K562 (cell line): ENCODE measurements at regions of chr11 and their contacts with region 1.

Region 1: DNA sequence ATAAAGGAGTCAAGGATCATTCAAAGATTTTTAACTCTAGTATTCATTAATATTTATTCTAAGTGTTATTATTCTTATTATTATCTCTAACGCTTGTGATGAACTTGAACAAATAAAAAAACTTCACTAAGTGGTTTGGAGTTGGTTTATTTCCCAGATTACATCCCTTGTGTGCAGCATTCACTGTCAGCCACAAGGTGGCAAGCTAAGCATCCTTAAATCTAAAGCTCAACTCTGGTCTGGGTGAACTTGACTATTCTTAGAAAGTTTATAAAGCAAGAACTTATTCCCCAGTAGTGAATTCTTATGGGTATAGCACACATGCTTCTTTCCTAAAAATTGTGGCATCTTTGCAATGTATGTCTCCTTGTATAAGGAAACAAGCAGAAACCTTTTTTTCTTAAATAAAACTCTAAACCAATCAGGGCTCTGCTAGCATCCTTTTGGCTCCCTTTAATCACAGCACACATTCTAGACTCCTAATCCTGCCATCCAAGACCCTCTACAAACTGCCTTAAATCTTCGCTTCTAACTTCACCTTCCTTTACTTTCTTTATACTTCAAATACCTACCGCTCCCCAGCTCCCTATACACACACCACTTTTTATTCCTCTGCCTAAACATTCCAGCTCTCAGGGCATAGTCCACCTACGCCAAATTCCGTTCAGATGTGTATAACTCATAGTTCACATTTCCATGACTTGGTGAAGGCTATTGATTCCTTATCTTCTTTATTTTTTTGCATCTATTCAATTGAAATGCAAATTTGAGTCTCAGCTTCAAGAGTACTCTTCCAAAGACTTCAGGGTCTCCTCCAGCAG is 1068.8 kb downstream of the DLG2 start:
- DNase-seq: peak; percentile 16 to 45 (median 28)
- ATAC-seq: peak; percentile 75; the same call in 2 of the 3 replicates
- H3K4me3 ChIP-seq: no peak overlapping the region
- H3K27ac ChIP-seq: no peak overlapping the region
- H3K4me1 ChIP-seq: no peaks in the 10 kb centered on the region
- H3K27me3 ChIP-seq: no peaks in the 10 kb centered on the region
- CTCF ChIP-seq: peak; percentile 26 to 59 (median 58); a peak in 4 of 6 replicates
- EP300 ChIP-seq: no peak
- POLR2A ChIP-seq: no peak
- RAD21 ChIP-seq: peak; percentile 43 to 71

Region 2: GRCh38 chr11:84157639-84158038 is 400.7 kb before region 1 on chr11:
- CTCF ChIA-PET with region 1: no interaction called
- POLR2A ChIA-PET with region 1: no interaction called
- in situ Hi-C with region 1: no loop called
- intact Hi-C with region 1: no loop called
- DNase-seq: no peak
- ATAC-seq: no peak
- H3K4me3 ChIP-seq: no peak overlapping the region
- H3K27ac ChIP-seq: no peak overlapping the region
- H3K4me1 ChIP-seq: no peaks in the 10 kb centered on the region
- H3K27me3 ChIP-seq: no peaks in the 10 kb centered on the region
- CTCF ChIP-seq: no peak
- EP300 ChIP-seq: no peak
- POLR2A ChIP-seq: no peak
- RAD21 ChIP-seq: no peak

Region 3: GRCh38 chr11:84543367-84544159 is 14.7 kb before region 1 on chr11:
- CTCF ChIA-PET with region 1: no interaction called
- POLR2A ChIA-PET with region 1: no interaction called
- in situ Hi-C with region 1: no loop called
- intact Hi-C with region 1: no loop called
- DNase-seq: no peak
- ATAC-seq: no peak
- H3K4me3 ChIP-seq: no peak overlapping the region
- H3K27ac ChIP-seq: no peak overlapping the region
- H3K4me1 ChIP-seq: no peaks in the 10 kb centered on the region
- H3K27me3 ChIP-seq: no peaks in the 10 kb centered on the region
- CTCF ChIP-seq: no peak
- EP300 ChIP-seq: no peak
- POLR2A ChIP-seq: no peak
- RAD21 ChIP-seq: no peak

Region 4: GRCh38 chr11:85572056-85572455 is 1013.8 kb after region 1 on chr11:
- CTCF ChIA-PET with region 1: no interaction called
- POLR2A ChIA-PET with region 1: no interaction called
- in situ Hi-C with region 1: no loop called
- intact Hi-C with region 1: loop called (anchors 10 kb)
- DNase-seq: no peak
- ATAC-seq: no peak
- H3K4me3 ChIP-seq: no peak overlapping the region
- H3K27ac ChIP-seq: no peak overlapping the region
- H3K4me1 ChIP-seq: no peaks in the 10 kb centered on the region
- H3K27me3 ChIP-seq: no peaks in the 10 kb centered on the region
- CTCF ChIP-seq: no peak
- EP300 ChIP-seq: no peak
- POLR2A ChIP-seq: no peak
- RAD21 ChIP-seq: no peak